WTC11 (cell line): ENCODE measurements at regions of chr21 and their contacts with region 1.

Region 1: GRCh38 chr21:39137248-39138178 is 45.7 kb downstream of the PSMG1 start:
- DNase-seq: peak; percentile 54
- ATAC-seq: peak; percentile 81
- H3K4me3 Mint-ChIP-seq: no peak overlapping the region
- H3K27ac Mint-ChIP-seq: peak overlapping the region; percentile 32; the same call in 1 of the 2 replicates
- H3K4me1 Mint-ChIP-seq: peaks cover 13% of the 10 kb centered on the region
- H3K27me3 Mint-ChIP-seq: no peaks in the 10 kb centered on the region; the same call in 1 of the 2 replicates
- CTCF ChIP-seq: no peak

Region 2: GRCh38 chr21:38505654-38506515 is 631.6 kb before region 1 on chr21:
- CTCF ChIA-PET with region 1: interaction called, 10 read pairs
- POLR2A ChIA-PET with region 1: no interaction called
- DNase-seq: no peak
- ATAC-seq: peak; percentile 79
- H3K4me3 Mint-ChIP-seq: no peak overlapping the region
- H3K27ac Mint-ChIP-seq: peak overlapping the region; percentile 72; the same call in 1 of the 2 replicates
- H3K4me1 Mint-ChIP-seq: peaks cover 46% of the 10 kb centered on the region
- H3K27me3 Mint-ChIP-seq: no peaks in the 10 kb centered on the region; the same call in 1 of the 2 replicates
- CTCF ChIP-seq: peak; percentile 29; the same call in 1 of the 2 replicates

Region 3: DNA sequence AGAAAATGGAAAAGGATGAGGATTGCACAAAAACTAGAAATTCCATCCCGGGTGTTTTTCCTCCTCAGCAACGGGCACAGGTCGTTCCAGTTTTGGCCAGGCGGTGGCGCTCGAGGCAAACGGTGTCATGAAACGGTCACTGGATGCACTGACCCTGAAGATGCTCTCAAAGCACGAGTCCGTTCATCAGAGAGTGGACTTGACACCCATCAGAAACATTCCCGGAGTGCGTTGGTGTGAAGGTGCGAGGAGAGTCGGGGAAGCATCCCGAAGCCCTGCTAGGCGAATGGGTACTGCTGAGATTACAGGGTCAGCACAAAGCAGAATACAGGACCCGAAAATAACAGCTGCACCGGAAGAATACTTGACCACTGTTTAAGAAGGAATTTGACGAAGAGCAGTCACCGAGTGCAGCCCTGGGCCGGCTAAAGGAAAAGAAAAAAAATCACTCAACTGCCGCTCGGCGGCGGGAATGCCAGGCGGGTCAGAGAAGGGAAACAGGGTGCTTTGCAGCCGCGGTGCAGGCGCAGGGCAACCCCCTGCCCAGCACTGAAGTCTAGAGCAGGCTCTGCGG is 403.5 kb before region 1 on chr21:
- CTCF ChIA-PET with region 1: interaction called, 15 read pairs
- POLR2A ChIA-PET with region 1: no interaction called
- DNase-seq: peak; percentile 94
- ATAC-seq: peak; percentile 89
- H3K4me3 Mint-ChIP-seq: peak overlapping the region; percentile 75
- H3K27ac Mint-ChIP-seq: peak overlapping the region; percentile 98
- H3K4me1 Mint-ChIP-seq: peaks cover 31% of the 10 kb centered on the region
- H3K27me3 Mint-ChIP-seq: peaks cover 4% of the 10 kb centered on the region; the same call in 1 of the 2 replicates
- CTCF ChIP-seq: peak; percentile 89

Region 4: GRCh38 chr21:39094847-39095579 is 42.5 kb before region 1 on chr21:
- CTCF ChIA-PET with region 1: interaction called, 13 read pairs
- POLR2A ChIA-PET with region 1: no interaction called
- DNase-seq: no peak
- ATAC-seq: no peak
- H3K4me3 Mint-ChIP-seq: no peak overlapping the region
- H3K27ac Mint-ChIP-seq: no peak overlapping the region
- H3K4me1 Mint-ChIP-seq: peaks cover 16% of the 10 kb centered on the region
- H3K27me3 Mint-ChIP-seq: no peaks in the 10 kb centered on the region; the same call in 1 of the 2 replicates
- CTCF ChIP-seq: no peak